Breast epithelium (tissue), 4 donors: ENCODE measurements at regions of chr4 and their contacts with region 1.

Region 1: GRCh38 chr4:182344968-182345367 is 101.8 kb downstream of the TENM3 start:
- DNase-seq: no peak
- H3K4me3 ChIP-seq: no peak overlapping the region
- H3K27ac ChIP-seq: no peak overlapping the region
- H3K4me1 ChIP-seq: no peaks in the 10 kb centered on the region
- H3K27me3 ChIP-seq: no peaks in the 10 kb centered on the region
- CTCF ChIP-seq: no peak
- POLR2A ChIP-seq: no peak

Region 2: DNA sequence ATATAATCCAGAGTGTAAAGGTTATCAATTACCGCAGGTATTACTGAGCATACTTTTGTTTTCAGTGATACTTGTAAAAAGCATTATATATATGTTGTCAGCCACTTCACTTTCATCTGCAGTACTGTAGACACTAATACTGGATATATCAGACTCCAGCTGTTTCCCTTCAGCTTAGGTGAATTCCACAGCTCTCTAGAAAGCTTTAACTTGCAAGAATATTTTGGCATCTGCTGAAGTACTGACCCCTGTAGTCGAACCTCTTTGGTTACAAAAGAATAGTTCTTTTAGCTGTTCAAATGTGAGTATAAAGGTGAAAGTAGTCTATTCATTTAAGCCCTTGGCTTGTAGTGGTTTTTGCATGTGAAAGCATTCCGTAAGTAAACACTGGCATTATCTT is 1324.5 kb before region 1 on chr4:
- intact Hi-C with region 1: no loop called
- DNase-seq: no peak
- H3K4me3 ChIP-seq: no peak overlapping the region
- H3K27ac ChIP-seq: no peak overlapping the region
- H3K4me1 ChIP-seq: no peaks in the 10 kb centered on the region
- H3K27me3 ChIP-seq: no peaks in the 10 kb centered on the region
- CTCF ChIP-seq: no peak
- POLR2A ChIP-seq: no peak

Region 3: DNA sequence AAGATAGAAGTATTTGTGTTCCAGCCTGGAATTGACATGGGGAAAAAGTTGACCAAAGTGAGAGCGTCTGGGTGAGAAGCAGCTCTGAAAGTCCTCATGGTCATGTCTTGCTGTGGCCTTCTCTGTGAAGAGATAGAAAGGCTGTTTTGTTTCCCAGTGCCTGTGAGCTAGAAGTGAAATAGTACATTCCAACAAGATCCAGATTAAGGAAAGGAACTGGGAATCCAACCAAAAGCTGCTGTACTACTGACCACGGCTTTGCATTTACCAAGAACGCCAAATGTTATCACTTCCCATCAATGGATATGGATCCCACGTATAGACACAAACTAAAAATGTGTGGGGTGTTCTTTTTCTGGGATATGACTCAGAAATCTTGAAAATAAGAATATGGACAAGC is 50.5 kb before region 1 on chr4:
- intact Hi-C with region 1: loop called (anchors 2 kb)
- DNase-seq: no peak
- H3K4me3 ChIP-seq: no peak overlapping the region
- H3K27ac ChIP-seq: no peak overlapping the region
- H3K4me1 ChIP-seq: no peaks in the 10 kb centered on the region
- H3K27me3 ChIP-seq: no peaks in the 10 kb centered on the region
- CTCF ChIP-seq: no peak
- POLR2A ChIP-seq: no peak